IMR-90 (cell line): ENCODE measurements at regions of chr5 and their contacts with region 1.

Region 1: DNA sequence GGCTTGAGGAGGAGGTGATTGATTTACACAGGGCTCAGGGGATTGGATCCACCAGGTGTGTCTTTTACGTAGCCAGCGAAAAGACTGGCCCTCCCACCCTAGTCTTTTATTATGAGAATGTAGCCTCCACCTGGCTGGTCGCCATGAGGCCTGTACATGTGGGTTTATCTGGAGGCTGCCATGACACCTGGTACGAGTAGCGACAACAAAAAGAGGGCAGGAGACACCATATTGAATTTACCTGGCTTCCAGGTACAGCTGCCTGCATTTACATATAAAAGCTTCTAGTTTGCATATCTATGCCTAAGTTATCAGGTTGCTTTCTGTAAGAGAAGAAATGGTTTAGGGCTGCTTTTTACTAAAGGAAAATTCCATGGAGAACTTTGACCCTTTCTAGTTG is 1173.7 kb upstream of the SEMA6A start:
- DNase-seq: no peak
- ATAC-seq: no peak
- H3K4me3 ChIP-seq: no peak overlapping the region
- H3K27ac ChIP-seq: no peak overlapping the region
- H3K4me1 ChIP-seq: no peaks in the 10 kb centered on the region
- H3K27me3 ChIP-seq: no peaks in the 10 kb centered on the region
- CTCF ChIP-seq: no peak
- POLR2A ChIP-seq: no peak
- RAD21 ChIP-seq: no peak

Region 2: DNA sequence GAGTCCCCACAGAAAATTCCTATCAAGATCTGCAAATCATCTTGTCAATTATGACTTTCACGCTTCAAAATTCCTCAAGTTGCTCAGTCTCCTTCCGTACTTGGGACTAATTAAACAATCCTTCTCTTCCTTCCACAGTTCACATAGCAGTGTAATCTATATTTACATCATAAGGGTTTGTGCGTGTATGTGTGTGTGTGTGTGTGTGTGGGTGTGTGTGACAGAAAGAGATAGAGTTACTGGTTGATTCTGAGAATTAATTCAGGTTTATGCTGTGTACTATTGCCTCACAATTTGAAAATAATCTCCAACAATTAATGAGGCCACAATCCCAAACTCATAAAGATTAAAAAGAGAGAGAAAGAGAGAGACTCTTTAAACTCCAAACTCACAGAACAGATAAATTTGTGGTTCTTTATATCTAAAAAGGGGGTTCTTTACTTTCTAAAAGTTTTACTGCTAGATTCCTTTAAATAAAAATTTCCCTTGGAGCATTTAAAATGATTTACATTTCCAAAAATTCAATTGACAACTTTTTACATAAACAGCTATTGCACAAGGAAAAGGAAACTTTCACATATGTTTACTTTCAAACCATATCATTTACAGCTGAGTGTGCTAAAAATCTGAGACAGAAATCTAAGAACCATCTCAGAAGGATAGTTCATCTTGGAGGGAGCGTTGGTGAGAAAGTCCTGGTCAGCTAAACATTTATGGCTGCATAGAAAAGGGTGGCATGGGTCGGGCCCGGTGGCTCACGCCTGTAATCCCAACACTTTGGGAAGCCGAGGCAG is 1004.4 kb after region 1 on chr5:
- CTCF ChIA-PET with region 1: no interaction called
- POLR2A ChIA-PET with region 1: interaction called, 12 read pairs
- dilution Hi-C with region 1: no loop called
- in situ Hi-C with region 1: no loop called
- intact Hi-C with region 1: no loop called
- DNase-seq: no peak
- ATAC-seq: no peak
- H3K4me3 ChIP-seq: no peak overlapping the region
- H3K27ac ChIP-seq: no peak overlapping the region
- H3K4me1 ChIP-seq: no peaks in the 10 kb centered on the region
- H3K27me3 ChIP-seq: no peaks in the 10 kb centered on the region
- CTCF ChIP-seq: no peak
- POLR2A ChIP-seq: no peak
- RAD21 ChIP-seq: no peak